HEK293 (cell line): ENCODE measurements at regions of chr2 and their contacts with region 1.

Region 1: DNA sequence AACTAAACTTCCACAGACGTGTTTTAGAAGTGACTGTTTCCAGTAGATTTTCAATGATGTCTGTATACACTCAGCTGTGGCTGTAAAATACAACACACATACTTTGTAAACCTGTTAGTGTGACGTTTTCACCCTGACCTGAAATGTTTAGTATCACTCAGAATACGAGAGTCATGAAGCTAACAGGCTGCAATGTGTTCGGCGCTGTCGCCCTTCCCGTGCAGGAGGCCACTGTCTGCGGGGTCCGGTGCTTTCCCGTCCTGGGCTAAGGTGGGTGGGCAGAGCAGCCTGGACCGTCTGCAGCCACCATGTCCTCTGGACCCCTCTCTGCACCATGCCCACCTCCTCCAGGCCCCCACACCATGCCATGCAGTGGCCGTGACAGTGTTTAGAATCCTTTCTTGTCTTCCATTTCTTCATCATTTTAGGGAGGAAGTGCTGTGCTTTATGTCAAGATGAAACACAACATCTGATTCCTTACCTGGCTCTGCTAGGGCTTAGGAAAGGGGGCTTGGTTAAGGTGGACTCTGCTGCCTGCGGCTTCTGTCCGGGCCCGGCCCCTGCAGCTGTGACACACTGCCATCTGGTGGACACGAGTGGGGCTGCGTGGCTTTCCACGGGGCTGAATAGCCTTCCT is 53.8 kb upstream of the RBM44 start:
- H3K4me3 ChIP-seq: no peak overlapping the region
- H3K27ac ChIP-seq: no peak overlapping the region
- H3K4me1 ChIP-seq: peaks cover 6% of the 10 kb centered on the region; the same call in 1 of the 2 replicates
- CTCF ChIP-seq: peak; percentile 83

Region 2: GRCh38 chr2:237500681-237501424 is 243.9 kb before region 1 on chr2:
- CTCF ChIA-PET with region 1: interaction called, 10 read pairs
- POLR2A ChIA-PET with region 1: no interaction called
- H3K4me3 ChIP-seq: no peak overlapping the region
- H3K27ac ChIP-seq: no peak overlapping the region
- H3K4me1 ChIP-seq: no peaks in the 10 kb centered on the region
- CTCF ChIP-seq: no peak

Region 3: GRCh38 chr2:237674731-237675276 is 69.9 kb before region 1 on chr2:
- CTCF ChIA-PET with region 1: interaction called, 110 read pairs
- POLR2A ChIA-PET with region 1: no interaction called
- H3K4me3 ChIP-seq: no peak overlapping the region
- H3K27ac ChIP-seq: no peak overlapping the region
- H3K4me1 ChIP-seq: peaks cover 6% of the 10 kb centered on the region
- CTCF ChIP-seq: no peak

Region 4: GRCh38 chr2:237726401-237726830 is 18.3 kb before region 1 on chr2:
- CTCF ChIA-PET with region 1: interaction called, 35 read pairs
- POLR2A ChIA-PET with region 1: no interaction called
- H3K4me3 ChIP-seq: no peak overlapping the region
- H3K27ac ChIP-seq: no peak overlapping the region
- H3K4me1 ChIP-seq: peaks cover 22% of the 10 kb centered on the region
- CTCF ChIP-seq: no peak

Region 5: GRCh38 chr2:237774802-237775553 is 30.2 kb after region 1 on chr2:
- CTCF ChIA-PET with region 1: interaction called, 11 read pairs
- POLR2A ChIA-PET with region 1: no interaction called
- H3K4me3 ChIP-seq: no peak overlapping the region
- H3K27ac ChIP-seq: no peak overlapping the region
- H3K4me1 ChIP-seq: no peaks in the 10 kb centered on the region
- CTCF ChIP-seq: peak; percentile 30; the same call in 1 of the 2 replicates